ENCODE measurements at regions of chr9 and their contacts with region 1.

Region 1: DNA sequence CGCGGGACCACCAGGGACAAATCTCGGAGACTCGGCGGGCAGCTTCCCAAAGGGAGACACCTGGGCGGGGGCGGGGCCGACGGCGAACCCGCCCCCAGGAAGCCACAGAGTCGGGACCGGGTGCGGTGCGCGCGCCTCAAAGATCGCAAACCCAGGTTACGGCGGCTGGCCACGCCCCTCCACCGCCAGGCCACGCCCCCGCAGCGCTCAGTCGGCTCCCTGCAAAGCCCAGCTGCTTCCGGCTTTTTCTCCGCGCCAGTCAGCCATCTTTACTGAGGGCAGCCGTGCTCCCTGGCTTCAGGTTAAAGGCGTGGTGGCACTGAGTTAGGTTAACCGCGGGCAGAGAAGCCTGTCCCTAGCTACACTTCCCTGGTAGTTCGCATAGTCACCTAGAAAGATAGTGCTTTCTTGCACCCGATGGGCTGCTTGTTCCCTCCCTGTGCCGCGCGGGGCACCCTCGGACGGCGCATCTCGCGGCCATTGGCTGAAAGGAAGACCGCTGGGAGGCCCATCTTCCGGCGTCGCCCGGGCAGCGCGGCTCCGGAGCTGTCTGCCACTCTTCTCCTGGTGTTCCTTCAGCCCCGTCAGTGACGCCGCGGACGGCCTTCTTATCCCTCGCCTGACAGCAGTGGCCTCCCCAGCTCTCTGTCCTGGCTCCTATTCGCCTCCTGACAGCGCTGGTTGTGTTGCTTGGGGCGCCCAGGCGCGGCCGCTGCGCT is at the start of gene TBC1D2:
- DNase-seq: peak; percentile 95 to 97 (median 96)
- ATAC-seq: peak; percentile 92
- H3K4me3 ChIP-seq: peak within 1 kb of the TSS; percentile 73
- H3K27ac ChIP-seq: peak within 1 kb of the TSS; percentile 92
- H3K4me1 ChIP-seq: peaks cover 26 to 37% of the 10 kb centered on the region in 2 experiments; a peak in 4 of 5 replicates
- H3K27me3 ChIP-seq: no peaks in the 10 kb centered on the region
- CTCF ChIP-seq: peak in 2 of 3 experiments; percentile 22 to 39; a peak in 2 of 6 replicates
- EP300 ChIP-seq: no peak
- POLR2A ChIP-seq: peak; percentile 85
- RAD21 ChIP-seq: no peak
- polyA plus RNA-seq, gene TBC1D2: 0.10 to 0.21 TPM

Region 2: GRCh38 chr9:98129451-98129881 is 126.3 kb before region 1 on chr9:
- CTCF ChIA-PET with region 1: no interaction called
- POLR2A ChIA-PET with region 1: no interaction called
- in situ Hi-C with region 1: no loop called
- intact Hi-C with region 1: no loop called
- DNase-seq: peak in 1 of 4 experiments; percentile 21
- ATAC-seq: peak; percentile 54
- H3K4me3 ChIP-seq: no peak overlapping the region
- H3K27ac ChIP-seq: no peak overlapping the region
- H3K4me1 ChIP-seq: no peaks in the 10 kb centered on the region; a peak in 1 of 5 replicates
- H3K27me3 ChIP-seq: no peaks in the 10 kb centered on the region
- CTCF ChIP-seq: no peak
- EP300 ChIP-seq: no peak
- POLR2A ChIP-seq: no peak
- RAD21 ChIP-seq: no peak

Region 3: GRCh38 chr9:98241357-98242300 is 14.1 kb before region 1 on chr9:
- CTCF ChIA-PET with region 1: no interaction called
- POLR2A ChIA-PET with region 1: interaction called, 21 read pairs
- in situ Hi-C with region 1: no loop called
- intact Hi-C with region 1: loop called (anchors 2 kb)
- DNase-seq: peak in 2 of 4 experiments; percentile 28 to 49
- ATAC-seq: peak; percentile 76
- H3K4me3 ChIP-seq: no peak overlapping the region
- H3K27ac ChIP-seq: peak overlapping the region; percentile 21; the same call in 2 of the 3 replicates
- H3K4me1 ChIP-seq: peaks cover 23 to 38% of the 10 kb centered on the region in 2 experiments
- H3K27me3 ChIP-seq: no peaks in the 10 kb centered on the region
- CTCF ChIP-seq: peak; percentile 41 to 64 (median 54)
- EP300 ChIP-seq: no peak
- POLR2A ChIP-seq: no peak
- RAD21 ChIP-seq: peak in 1 of 2 experiments; percentile 39; a peak in 2 of 4 replicates

Measured in K562 (cell line).